Activated T-helper 2 cell treated with anti-CD3 and anti-CD28 coated beads, Interferon-gamma antibody, Interleukin-2, Interleukin-4, amounts not matched to agents 10 μg/mL and 5 μg/mL and 100 μg/mL, durations not matched to agents 14 hours and 24 hours and 36 hours (primary cell): ENCODE measurements at regions of chr2 and their contacts with region 1.

Region 1: DNA sequence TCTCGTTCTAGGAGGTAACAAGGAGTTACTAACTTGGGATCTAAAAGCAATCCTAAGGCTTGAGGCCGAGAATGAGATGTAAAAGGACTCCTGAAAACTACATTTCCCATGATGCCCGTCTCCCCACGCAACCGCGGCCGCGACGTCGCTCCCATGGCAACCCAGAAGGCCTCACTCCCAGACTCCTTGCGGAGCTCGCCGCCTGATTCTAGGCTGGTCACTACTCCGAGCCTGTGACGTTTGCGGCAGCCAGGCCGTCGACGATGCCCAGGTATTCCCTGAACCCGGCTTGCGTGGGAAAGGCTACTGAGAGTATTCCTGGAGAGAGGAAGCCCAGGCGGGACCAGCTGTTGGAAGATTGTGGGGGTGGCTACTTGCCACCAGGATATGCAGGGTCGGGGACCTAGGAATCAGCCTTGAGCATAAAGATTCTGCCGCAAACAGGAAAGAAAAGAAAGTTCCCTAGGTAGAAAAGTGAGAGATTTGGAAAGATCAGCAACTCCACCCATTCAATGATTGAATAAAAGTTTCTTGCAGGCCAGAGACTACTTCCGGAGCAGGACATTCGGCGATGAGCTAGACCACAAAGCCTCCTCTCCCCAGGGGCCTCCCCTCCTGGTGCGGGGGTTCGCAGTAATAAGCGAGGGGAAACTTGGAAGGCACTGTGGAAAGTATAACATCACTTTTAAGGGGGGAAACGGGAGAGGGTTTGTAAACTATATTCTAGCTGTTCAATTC is at the start of gene DYNC2LI1:
- DNase-seq: peak; percentile 74
- H3K4me3 Mint-ChIP-seq: peak within 1 kb of the TSS; percentile 86
- H3K27ac Mint-ChIP-seq: peak within 1 kb of the TSS; percentile 95
- H3K4me1 Mint-ChIP-seq: peaks cover 31% of the 10 kb centered on the region
- H3K27me3 Mint-ChIP-seq: no peaks in the 10 kb centered on the region
- total RNA-seq, gene DYNC2LI1: 67.7 and 71.6 TPM in 2 replicates

Region 2: GRCh38 chr2:43787895-43788294 is 13.8 kb after region 1 on chr2:
- intact Hi-C with region 1: loop called (anchors 1 kb)
- DNase-seq: no peak
- H3K4me3 Mint-ChIP-seq: no peak overlapping the region
- H3K27ac Mint-ChIP-seq: peak overlapping the region; percentile 81
- H3K4me1 Mint-ChIP-seq: peaks cover 33% of the 10 kb centered on the region
- H3K27me3 Mint-ChIP-seq: no peaks in the 10 kb centered on the region

Region 3: DNA sequence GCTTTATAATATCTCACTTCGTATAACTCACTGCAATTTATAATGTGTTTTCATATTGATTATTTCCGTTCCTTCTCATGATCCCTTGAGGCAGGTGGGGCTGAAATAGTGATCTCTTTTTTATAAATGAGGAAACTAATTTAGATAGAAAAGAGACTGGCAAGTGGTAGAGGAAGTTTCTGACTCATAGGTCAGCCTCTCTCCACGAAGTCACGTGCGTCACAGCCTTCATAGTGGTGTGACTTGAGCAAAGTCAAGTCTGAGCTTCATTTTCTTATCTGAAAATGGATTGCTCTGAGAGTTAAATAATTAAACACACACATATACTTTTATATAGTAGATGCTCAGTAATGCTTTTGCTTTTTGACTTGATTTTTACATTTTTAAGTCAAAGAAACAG is 44.7 kb after region 1 on chr2:
- intact Hi-C with region 1: loop called (anchors 5 kb)
- DNase-seq: no peak
- H3K4me3 Mint-ChIP-seq: no peak overlapping the region
- H3K27ac Mint-ChIP-seq: peak overlapping the region; percentile 24
- H3K4me1 Mint-ChIP-seq: peaks cover 10% of the 10 kb centered on the region
- H3K27me3 Mint-ChIP-seq: no peaks in the 10 kb centered on the region

Region 4: DNA sequence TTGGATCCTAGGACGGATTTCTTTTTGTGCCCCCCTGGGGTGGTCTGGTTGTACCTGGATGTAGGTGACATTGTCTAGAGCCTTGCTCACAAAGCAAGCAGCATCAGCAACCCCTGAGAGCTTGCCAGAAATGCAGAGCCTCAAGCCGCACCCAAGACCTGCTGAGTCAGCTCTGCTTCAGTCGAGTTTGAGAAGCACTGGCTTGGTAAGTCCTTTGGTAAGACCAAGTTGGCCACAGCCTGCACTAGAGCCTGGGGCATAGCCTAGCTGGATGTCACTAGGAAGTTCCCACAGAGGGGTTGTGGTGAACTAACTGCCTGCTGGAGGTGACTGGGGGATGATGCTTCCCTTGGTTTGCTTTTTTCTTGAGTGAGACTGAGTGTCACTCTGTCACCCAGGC is 58.4 kb after region 1 on chr2:
- intact Hi-C with region 1: no loop called
- DNase-seq: no peak
- H3K4me3 Mint-ChIP-seq: no peak overlapping the region
- H3K27ac Mint-ChIP-seq: no peak overlapping the region
- H3K4me1 Mint-ChIP-seq: peaks cover 4% of the 10 kb centered on the region
- H3K27me3 Mint-ChIP-seq: peaks cover 22% of the 10 kb centered on the region